Activated CD4-positive, alpha-beta memory T cell treated with anti-CD3 and anti-CD28 coated beads for 36 hours (primary cell): ENCODE measurements at regions of chr19 and their contacts with region 1.

Region 1: GRCh38 chr19:18251587-18252369 is 22.5 kb downstream of the IQCN start:
- DNase-seq: peak; percentile 88
- H3K4me3 Mint-ChIP-seq: no peak overlapping the region
- H3K27ac Mint-ChIP-seq: peak overlapping the region; percentile 6
- H3K4me1 Mint-ChIP-seq: peaks cover 4% of the 10 kb centered on the region
- H3K27me3 Mint-ChIP-seq: peaks cover 14% of the 10 kb centered on the region

Region 2: DNA sequence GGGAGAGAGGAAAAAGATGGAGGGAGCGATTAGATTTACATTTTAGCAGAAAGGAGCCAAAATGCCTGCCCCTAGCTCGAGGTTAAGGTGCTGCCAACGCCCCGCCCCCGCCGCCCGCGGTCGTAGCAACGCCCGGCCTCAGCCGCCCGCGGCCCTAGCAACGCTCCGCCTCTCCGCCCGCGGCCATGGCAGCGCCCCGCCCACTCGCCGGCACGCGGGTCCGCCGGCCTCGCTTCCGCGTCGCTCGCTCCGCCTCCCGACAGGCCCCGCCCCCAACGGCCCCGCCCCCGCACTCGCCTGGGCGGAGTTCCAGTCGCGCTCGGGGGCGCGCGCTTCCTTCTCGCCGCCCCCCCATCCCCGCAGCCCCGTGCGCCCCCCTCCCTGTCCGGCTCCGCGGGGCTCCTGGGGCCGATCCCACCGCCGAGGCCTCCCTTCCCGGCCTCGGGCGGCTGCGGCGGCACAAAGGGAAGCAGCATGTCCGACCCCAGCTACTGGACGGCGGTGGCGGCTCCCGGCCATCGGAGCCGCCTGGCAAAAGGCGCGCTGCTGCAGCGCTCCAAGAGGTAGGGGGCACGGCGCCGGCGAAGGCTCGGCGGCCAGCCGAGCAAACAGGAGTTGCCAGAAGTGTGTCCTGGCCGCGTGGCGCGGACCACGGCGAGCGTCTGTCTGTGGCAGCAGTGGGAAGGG is 133.9 kb before region 1 on chr19:
- CTCF ChIA-PET with region 1: interaction called, 12 read pairs
- POLR2A ChIA-PET with region 1: no interaction called
- intact Hi-C with region 1: loop called (anchors 1 kb)
- DNase-seq: peak; percentile 95
- H3K4me3 Mint-ChIP-seq: peak overlapping the region; percentile 81
- H3K27ac Mint-ChIP-seq: peak overlapping the region; percentile 87
- H3K4me1 Mint-ChIP-seq: peaks cover 36% of the 10 kb centered on the region
- H3K27me3 Mint-ChIP-seq: no peaks in the 10 kb centered on the region

Region 3: GRCh38 chr19:18203863-18204393 is 47.9 kb before region 1 on chr19 and contains the start of gene RAB3A:
- CTCF ChIA-PET with region 1: interaction called, 170 read pairs
- POLR2A ChIA-PET with region 1: interaction called, 3 read pairs
- intact Hi-C with region 1: loop called (anchors 1 kb)
- DNase-seq: peak; percentile 100
- H3K4me3 Mint-ChIP-seq: peak within 1 kb of the TSS; percentile 93
- H3K27ac Mint-ChIP-seq: peak within 1 kb of the TSS; percentile 69
- H3K4me1 Mint-ChIP-seq: peaks cover 21% of the 10 kb centered on the region
- H3K27me3 Mint-ChIP-seq: peaks cover 3% of the 10 kb centered on the region
- total RNA-seq, gene RAB3A: 3.9 to 4.3 TPM

Region 4: GRCh38 chr19:18239303-18239702 is 12.5 kb before region 1 on chr19:
- CTCF ChIA-PET with region 1: interaction called, 13 read pairs
- POLR2A ChIA-PET with region 1: interaction called, 3 read pairs
- intact Hi-C with region 1: no loop called
- DNase-seq: no peak
- H3K4me3 Mint-ChIP-seq: no peak overlapping the region
- H3K27ac Mint-ChIP-seq: no peak overlapping the region
- H3K4me1 Mint-ChIP-seq: no peaks in the 10 kb centered on the region
- H3K27me3 Mint-ChIP-seq: peaks cover 28% of the 10 kb centered on the region

Region 5: GRCh38 chr19:18291590-18292461 is 40.0 kb after region 1 on chr19:
- CTCF ChIA-PET with region 1: no interaction called
- POLR2A ChIA-PET with region 1: no interaction called
- intact Hi-C with region 1: no loop called
- DNase-seq: peak; percentile 96
- H3K4me3 Mint-ChIP-seq: peak overlapping the region; percentile 90
- H3K27ac Mint-ChIP-seq: peak overlapping the region; percentile 98
- H3K4me1 Mint-ChIP-seq: peaks cover 68% of the 10 kb centered on the region
- H3K27me3 Mint-ChIP-seq: no peaks in the 10 kb centered on the region

Region 6: DNA sequence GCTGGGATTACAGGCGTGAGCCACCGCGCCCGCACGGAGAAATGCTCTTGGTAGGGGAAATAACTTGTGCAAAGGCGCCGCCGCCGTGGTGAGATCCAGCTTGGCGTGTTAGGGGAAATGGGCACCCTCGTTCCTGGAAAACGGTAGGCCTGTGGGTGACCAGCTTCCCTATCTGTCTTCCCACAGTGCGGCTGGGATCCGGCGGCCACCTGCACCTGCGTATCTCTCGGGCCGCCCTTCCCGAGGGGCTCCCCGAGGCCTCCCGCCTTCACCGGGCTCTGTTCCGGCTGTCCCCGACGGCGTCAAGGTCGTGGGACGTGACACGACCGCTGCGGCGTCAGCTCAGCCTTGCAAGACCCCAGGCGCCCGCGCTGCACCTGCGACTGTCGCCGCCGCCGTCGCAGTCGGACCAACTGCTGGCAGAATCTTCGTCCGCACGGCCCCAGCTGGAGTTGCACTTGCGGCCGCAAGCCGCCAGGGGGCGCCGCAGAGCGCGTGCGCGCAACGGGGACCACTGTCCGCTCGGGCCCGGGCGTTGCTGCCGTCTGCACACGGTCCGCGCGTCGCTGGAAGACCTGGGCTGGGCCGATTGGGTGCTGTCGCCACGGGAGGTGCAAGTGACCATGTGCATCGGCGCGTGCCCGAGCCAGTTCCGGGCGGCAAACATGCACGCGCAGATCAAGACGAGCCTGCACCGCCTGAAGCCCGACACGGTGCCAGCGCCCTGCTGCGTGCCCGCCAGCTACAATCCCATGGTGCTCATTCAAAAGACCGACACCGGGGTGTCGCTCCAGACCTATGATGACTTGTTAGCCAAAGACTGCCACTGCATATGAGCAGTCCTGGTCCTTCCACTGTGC is 136.6 kb after region 1 on chr19:
- CTCF ChIA-PET with region 1: interaction called, 19 read pairs
- POLR2A ChIA-PET with region 1: no interaction called
- intact Hi-C with region 1: no loop called
- DNase-seq: peak; percentile 88
- H3K4me3 Mint-ChIP-seq: peak overlapping the region; percentile 64
- H3K27ac Mint-ChIP-seq: no peak overlapping the region
- H3K4me1 Mint-ChIP-seq: peaks cover 4% of the 10 kb centered on the region
- H3K27me3 Mint-ChIP-seq: peaks cover 31% of the 10 kb centered on the region